ENCODE measurements at regions of chr2 and their contacts with region 1.

Region 1: GRCh38 chr2:219171231-219171651 is 1.4 kb upstream of the SLC23A3 start:
- DNase-seq: peak; percentile 67
- ATAC-seq: peak; percentile 52
- H3K4me3 ChIP-seq: no peak overlapping the region
- H3K4me3 Mint-ChIP-seq: no peak overlapping the region
- H3K27ac ChIP-seq: peak overlapping the region in 1 of 2 donors; percentile 21
- H3K27ac Mint-ChIP-seq: peak overlapping the region; percentile 67
- H3K4me1 ChIP-seq: peaks cover 6 to 28% of the 10 kb centered on the region in 2 donors
- H3K4me1 Mint-ChIP-seq: peaks cover 25% of the 10 kb centered on the region
- H3K27me3 ChIP-seq: no peaks in the 10 kb centered on the region
- H3K27me3 Mint-ChIP-seq: no peaks in the 10 kb centered on the region
- CTCF ChIP-seq: peak; percentile 83

Region 2: DNA sequence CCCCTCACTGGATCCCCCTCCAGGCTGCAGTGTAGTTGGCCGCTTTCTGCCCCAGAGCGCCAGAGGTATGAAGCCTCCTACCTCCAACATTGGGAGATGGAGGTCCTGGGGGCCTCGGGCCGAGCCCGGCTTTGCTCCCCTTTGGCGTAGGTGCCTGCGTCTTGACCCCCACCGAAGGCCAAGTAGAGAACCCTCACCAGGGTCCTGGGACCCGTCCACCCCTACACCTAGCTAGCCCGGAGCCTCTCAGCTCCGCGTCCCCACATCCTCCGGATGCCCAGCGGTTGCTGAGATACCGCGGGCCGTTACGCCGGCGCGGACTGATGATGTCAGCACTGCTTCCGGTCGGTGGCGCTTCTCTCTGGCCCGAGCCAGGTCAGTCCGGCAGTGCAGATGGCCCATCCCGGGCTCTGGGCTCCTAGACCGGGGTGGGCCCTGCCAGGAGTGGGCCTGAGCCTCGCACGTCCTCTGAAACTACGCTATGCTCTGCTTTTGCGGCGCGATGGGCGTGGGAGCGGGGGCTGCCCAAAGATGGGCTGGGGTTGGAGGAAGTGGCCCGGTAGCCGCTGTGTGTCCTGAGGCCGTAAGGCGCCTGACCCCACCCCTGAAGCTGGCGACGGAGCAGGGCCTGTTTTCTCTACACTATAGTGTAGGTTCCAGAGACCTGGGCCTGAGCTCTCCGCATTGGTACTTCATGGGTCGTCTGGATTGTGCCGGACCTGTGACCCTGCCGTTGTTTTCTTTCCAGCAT is 74.1 kb after region 1 on chr2 and contains the starts of genes GLB1L and STK16:
- CTCF ChIA-PET with region 1: interaction called, 13 read pairs
- POLR2A ChIA-PET with region 1: interaction called, 29 read pairs
- intact Hi-C with region 1: loop called (anchors 2 kb)
- DNase-seq: peak; percentile 93
- ATAC-seq: peak; percentile 67
- H3K4me3 ChIP-seq: peak within 1 kb of the TSS; percentile 50 to 98 (median 94)
- H3K4me3 Mint-ChIP-seq: peak within 1 kb of the TSS; percentile 92
- H3K27ac ChIP-seq: peak within 1 kb of the TSS; percentile 87 to 92
- H3K27ac Mint-ChIP-seq: peak within 1 kb of the TSS; percentile 96
- H3K4me1 ChIP-seq: peaks cover 52 to 58% of the 10 kb centered on the region in 2 donors
- H3K4me1 Mint-ChIP-seq: peaks cover 62% of the 10 kb centered on the region
- H3K27me3 ChIP-seq: no peaks in the 10 kb centered on the region
- H3K27me3 Mint-ChIP-seq: no peaks in the 10 kb centered on the region
- CTCF ChIP-seq: no peak
- total RNA-seq, gene GLB1L: 3.9 and 4.1 TPM in 2 replicates
- total RNA-seq, gene STK16: 29.0 and 29.3 TPM in 2 replicates

Region 3: GRCh38 chr2:219253753-219254590 is 82.7 kb after region 1 on chr2 and contains the start of gene TUBA4A:
- CTCF ChIA-PET with region 1: interaction called, 18 read pairs
- POLR2A ChIA-PET with region 1: interaction called, 29 read pairs
- intact Hi-C with region 1: no loop called
- DNase-seq: peak; percentile 93
- ATAC-seq: peak; percentile 72
- H3K4me3 ChIP-seq: peak within 1 kb of the TSS; percentile 83 to 97 (median 90)
- H3K4me3 Mint-ChIP-seq: peak within 1 kb of the TSS; percentile 87
- H3K27ac ChIP-seq: peak within 1 kb of the TSS; percentile 93 to 94
- H3K27ac Mint-ChIP-seq: peak within 1 kb of the TSS; percentile 96
- H3K4me1 ChIP-seq: peaks cover 34 to 44% of the 10 kb centered on the region in 2 donors
- H3K4me1 Mint-ChIP-seq: peaks cover 49% of the 10 kb centered on the region
- H3K27me3 ChIP-seq: no peaks in the 10 kb centered on the region
- H3K27me3 Mint-ChIP-seq: no peaks in the 10 kb centered on the region
- CTCF ChIP-seq: no peak
- total RNA-seq, gene TUBA4A: 196 and 213 TPM in 2 replicates

Region 4: DNA sequence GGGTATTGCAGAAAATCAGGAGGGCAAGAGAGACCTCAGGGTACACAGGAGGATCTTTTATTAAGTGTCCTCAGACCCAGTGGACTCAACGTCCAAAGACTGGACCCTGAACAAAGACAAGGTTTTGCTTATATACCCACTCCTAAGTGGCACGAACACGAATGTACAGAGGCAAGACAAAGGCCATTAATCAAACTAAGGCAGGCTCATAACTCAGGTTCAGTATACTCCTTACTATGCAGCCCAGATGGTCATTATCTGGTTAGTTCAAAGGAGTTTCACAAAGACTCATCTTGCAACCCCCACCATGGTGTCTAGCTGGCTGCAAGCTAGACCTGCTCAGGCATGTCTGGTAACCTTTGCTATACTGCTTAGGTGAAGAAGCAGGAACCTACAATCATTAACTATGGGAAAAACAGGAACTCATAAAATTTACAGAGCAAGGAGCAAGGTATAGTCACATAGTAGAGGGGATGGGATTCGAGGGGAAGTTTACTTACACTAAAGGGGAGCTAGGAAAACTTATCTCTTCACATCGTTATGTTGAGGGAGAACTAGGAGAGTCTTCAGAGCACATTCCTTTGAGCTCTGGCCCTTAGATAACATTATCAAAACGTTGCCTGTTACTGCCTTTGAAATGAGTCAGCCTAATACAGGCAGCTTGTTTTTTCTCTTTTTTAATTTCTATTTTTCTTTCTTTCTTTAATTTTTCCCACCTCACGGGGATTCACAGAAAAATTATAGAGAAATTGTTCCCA is 490.1 kb after region 1 on chr2:
- CTCF ChIA-PET with region 1: no interaction called
- POLR2A ChIA-PET with region 1: no interaction called
- intact Hi-C with region 1: no loop called
- DNase-seq: no peak
- ATAC-seq: no peak
- H3K4me3 ChIP-seq: no peak overlapping the region
- H3K4me3 Mint-ChIP-seq: no peak overlapping the region
- H3K27ac ChIP-seq: no peak overlapping the region
- H3K27ac Mint-ChIP-seq: no peak overlapping the region
- H3K4me1 ChIP-seq: no peaks in the 10 kb centered on the region
- H3K4me1 Mint-ChIP-seq: no peaks in the 10 kb centered on the region
- H3K27me3 ChIP-seq: peaks cover 0 to 9% (median 0%) of the 10 kb centered on the region in 4 experiments
- H3K27me3 Mint-ChIP-seq: peaks cover 39% of the 10 kb centered on the region
- CTCF ChIP-seq: no peak

Region 5: DNA sequence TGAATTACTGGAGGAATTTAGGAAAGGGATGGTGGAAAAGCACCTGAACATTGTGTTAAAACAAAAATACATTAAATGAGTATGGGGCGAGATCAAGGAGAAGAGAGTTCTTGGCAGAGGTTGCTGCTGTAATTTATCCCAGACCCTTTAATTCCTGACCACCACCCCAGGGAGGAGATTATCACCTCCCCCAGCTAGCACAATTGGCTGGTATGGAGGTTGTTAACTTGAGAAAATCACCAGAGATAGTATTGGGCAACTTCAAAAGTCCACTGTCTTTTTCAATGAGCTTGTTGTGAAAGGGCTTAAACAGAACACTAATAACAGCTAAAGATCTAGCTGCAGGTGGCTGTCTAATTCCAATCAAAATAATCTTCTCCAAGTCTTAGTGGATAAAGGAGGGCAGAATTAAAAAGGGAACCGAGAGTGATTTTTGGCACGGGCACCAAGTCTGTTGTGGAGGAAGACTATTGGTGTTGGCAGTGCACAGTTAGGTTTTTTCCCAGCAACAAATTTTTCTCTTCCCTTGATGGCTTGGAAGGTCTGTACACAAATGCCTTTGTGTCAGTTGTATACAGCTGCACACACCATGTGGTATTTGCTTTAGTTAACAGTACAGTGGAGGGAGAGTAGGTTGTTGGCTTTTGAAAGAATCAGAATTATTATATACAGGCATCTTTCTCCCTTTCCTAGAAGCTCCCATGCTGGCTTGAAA is 745.6 kb after region 1 on chr2:
- CTCF ChIA-PET with region 1: no interaction called
- POLR2A ChIA-PET with region 1: no interaction called
- intact Hi-C with region 1: no loop called
- DNase-seq: no peak
- ATAC-seq: no peak
- H3K4me3 ChIP-seq: no peak overlapping the region
- H3K4me3 Mint-ChIP-seq: no peak overlapping the region
- H3K27ac ChIP-seq: no peak overlapping the region
- H3K27ac Mint-ChIP-seq: no peak overlapping the region
- H3K4me1 ChIP-seq: no peaks in the 10 kb centered on the region
- H3K4me1 Mint-ChIP-seq: no peaks in the 10 kb centered on the region
- H3K27me3 ChIP-seq: no peaks in the 10 kb centered on the region
- H3K27me3 Mint-ChIP-seq: no peaks in the 10 kb centered on the region
- CTCF ChIP-seq: no peak